B cell (primary cell): ENCODE measurements at regions of chr13 and their contacts with region 1.

Region 1: DNA sequence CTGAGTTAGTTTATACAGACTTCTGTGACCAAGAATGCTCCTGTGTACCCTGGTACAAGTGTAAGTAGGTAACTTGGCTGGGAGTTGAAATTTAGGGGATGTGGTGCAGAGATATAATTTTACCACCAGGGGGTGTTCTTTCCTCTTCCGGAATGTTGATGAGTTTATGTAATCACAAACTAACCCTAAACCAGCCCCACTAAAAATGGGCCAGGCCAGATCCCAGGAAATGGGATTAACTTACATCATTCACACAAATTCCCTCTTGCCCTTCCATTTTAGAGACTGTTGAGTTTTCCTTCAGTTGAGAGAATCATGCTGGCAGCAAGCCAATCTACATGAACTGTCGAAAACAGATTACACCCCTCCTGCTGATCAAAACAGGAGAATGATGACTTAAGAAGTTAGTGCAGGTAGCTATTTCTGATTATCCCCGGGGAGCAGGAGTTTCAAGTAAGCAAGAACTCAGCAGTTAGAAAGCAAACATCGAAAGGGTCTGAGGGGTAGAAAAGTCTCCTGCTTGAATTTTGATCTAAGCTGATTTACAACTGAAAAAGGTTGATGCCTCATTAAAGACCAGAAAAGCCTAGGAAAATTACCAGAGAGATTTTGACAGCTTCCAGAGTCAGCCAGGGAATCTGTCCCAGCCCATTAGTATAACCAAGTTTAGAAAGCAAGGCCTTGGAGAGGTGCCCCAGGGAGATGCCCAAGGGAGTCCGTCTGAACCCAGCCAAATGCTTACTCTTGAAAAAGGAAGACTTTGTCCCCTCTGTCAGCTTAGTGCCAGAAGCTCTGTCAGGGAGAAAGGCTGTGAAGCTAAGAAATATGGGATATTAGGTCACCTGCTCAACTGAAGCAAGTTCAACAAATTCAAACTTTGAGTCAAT is 32.3 kb upstream of the MED4 start:
- DNase-seq: peak; percentile 81
- ATAC-seq: peak; percentile 81
- H3K4me3 ChIP-seq: no peak overlapping the region
- H3K4me3 Mint-ChIP-seq: peak overlapping the region; percentile 3
- H3K27ac ChIP-seq: no peak overlapping the region
- H3K27ac Mint-ChIP-seq: no peak overlapping the region
- H3K4me1 ChIP-seq: peaks cover 10 to 12% of the 10 kb centered on the region in 2 donors
- H3K4me1 Mint-ChIP-seq: peaks cover 7% of the 10 kb centered on the region
- H3K27me3 ChIP-seq: no peaks in the 10 kb centered on the region
- H3K27me3 Mint-ChIP-seq: peaks cover 7% of the 10 kb centered on the region
- CTCF ChIP-seq: peak; percentile 82

Region 2: GRCh38 chr13:48043789-48044503 is 83.2 kb before region 1 on chr13:
- CTCF ChIA-PET with region 1: no interaction called
- POLR2A ChIA-PET with region 1: no interaction called
- intact Hi-C with region 1: no loop called
- DNase-seq: no peak
- ATAC-seq: no peak
- H3K4me3 ChIP-seq: no peak overlapping the region
- H3K4me3 Mint-ChIP-seq: no peak overlapping the region
- H3K27ac ChIP-seq: no peak overlapping the region
- H3K27ac Mint-ChIP-seq: no peak overlapping the region
- H3K4me1 ChIP-seq: no peaks in the 10 kb centered on the region
- H3K4me1 Mint-ChIP-seq: peaks cover 3% of the 10 kb centered on the region
- H3K27me3 ChIP-seq: no peaks in the 10 kb centered on the region
- H3K27me3 Mint-ChIP-seq: no peaks in the 10 kb centered on the region
- CTCF ChIP-seq: no peak

Region 3: GRCh38 chr13:48108106-48108505 is 19.1 kb before region 1 on chr13:
- CTCF ChIA-PET with region 1: no interaction called
- POLR2A ChIA-PET with region 1: no interaction called
- intact Hi-C with region 1: no loop called
- DNase-seq: no peak
- ATAC-seq: no peak
- H3K4me3 ChIP-seq: no peak overlapping the region
- H3K4me3 Mint-ChIP-seq: no peak overlapping the region
- H3K27ac ChIP-seq: no peak overlapping the region
- H3K27ac Mint-ChIP-seq: no peak overlapping the region
- H3K4me1 ChIP-seq: no peaks in the 10 kb centered on the region
- H3K4me1 Mint-ChIP-seq: no peaks in the 10 kb centered on the region
- H3K27me3 ChIP-seq: peaks cover 0 to 4% (median 2%) of the 10 kb centered on the region in 4 experiments
- H3K27me3 Mint-ChIP-seq: peaks cover 35% of the 10 kb centered on the region
- CTCF ChIP-seq: no peak

Region 4: DNA sequence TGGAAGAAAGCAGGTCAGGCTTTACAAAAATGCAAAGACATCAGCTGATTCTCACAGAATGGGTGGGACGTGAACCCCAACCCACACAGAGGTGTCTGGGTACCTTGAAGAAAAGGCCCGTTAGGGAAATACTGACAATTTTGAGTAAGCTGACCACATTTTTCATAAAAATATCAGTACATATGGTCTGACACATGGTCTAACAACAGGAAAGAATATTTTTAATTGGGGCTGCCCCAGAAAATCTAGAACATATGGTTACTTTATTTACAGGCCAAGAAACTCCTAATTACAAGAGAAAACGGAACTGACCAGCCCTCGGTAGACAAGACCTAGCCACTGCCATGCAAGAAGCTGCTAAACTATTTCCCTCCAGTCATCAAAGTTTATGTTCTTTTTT is 57.1 kb after region 1 on chr13:
- CTCF ChIA-PET with region 1: interaction called, 5 read pairs
- POLR2A ChIA-PET with region 1: no interaction called
- intact Hi-C with region 1: loop called (anchors 5 kb)
- DNase-seq: peak; percentile 23
- ATAC-seq: no peak
- H3K4me3 ChIP-seq: no peak overlapping the region
- H3K4me3 Mint-ChIP-seq: peak overlapping the region; percentile 43
- H3K27ac ChIP-seq: peak overlapping the region; percentile 46 to 70
- H3K27ac Mint-ChIP-seq: peak overlapping the region; percentile 62
- H3K4me1 ChIP-seq: peaks cover 59 to 68% of the 10 kb centered on the region in 2 donors
- H3K4me1 Mint-ChIP-seq: peaks cover 59% of the 10 kb centered on the region
- H3K27me3 ChIP-seq: no peaks in the 10 kb centered on the region
- H3K27me3 Mint-ChIP-seq: no peaks in the 10 kb centered on the region
- CTCF ChIP-seq: no peak

Region 5: GRCh38 chr13:48334534-48335127 is 207.4 kb after region 1 on chr13:
- CTCF ChIA-PET with region 1: interaction called, 33 read pairs
- POLR2A ChIA-PET with region 1: no interaction called
- intact Hi-C with region 1: loop called (anchors 5 kb)
- DNase-seq: peak; percentile 63
- ATAC-seq: peak; percentile 33
- H3K4me3 ChIP-seq: no peak overlapping the region
- H3K4me3 Mint-ChIP-seq: no peak overlapping the region
- H3K27ac ChIP-seq: no peak overlapping the region
- H3K27ac Mint-ChIP-seq: no peak overlapping the region
- H3K4me1 ChIP-seq: no peaks in the 10 kb centered on the region
- H3K4me1 Mint-ChIP-seq: peaks cover 12% of the 10 kb centered on the region
- H3K27me3 ChIP-seq: no peaks in the 10 kb centered on the region
- H3K27me3 Mint-ChIP-seq: no peaks in the 10 kb centered on the region
- CTCF ChIP-seq: peak; percentile 82

Region 6: GRCh38 chr13:48647630-48648029 is 520.4 kb after region 1 on chr13:
- CTCF ChIA-PET with region 1: interaction called, 10 read pairs
- POLR2A ChIA-PET with region 1: no interaction called
- intact Hi-C with region 1: loop called (anchors 2 kb)
- DNase-seq: peak; percentile 23
- ATAC-seq: no peak
- H3K4me3 ChIP-seq: no peak overlapping the region
- H3K4me3 Mint-ChIP-seq: no peak overlapping the region
- H3K27ac ChIP-seq: no peak overlapping the region
- H3K27ac Mint-ChIP-seq: no peak overlapping the region
- H3K4me1 ChIP-seq: no peaks in the 10 kb centered on the region
- H3K4me1 Mint-ChIP-seq: no peaks in the 10 kb centered on the region
- H3K27me3 ChIP-seq: peaks cover 0 to 4% (median 0%) of the 10 kb centered on the region in 4 experiments
- H3K27me3 Mint-ChIP-seq: peaks cover 24% of the 10 kb centered on the region
- CTCF ChIP-seq: peak; percentile 37